ENCODE measurements at regions of chr7 and their contacts with region 1.

Region 1: GRCh38 chr7:99143853-99144672 is at the start of gene SMURF1:
- DNase-seq: peak; percentile 72
- H3K4me3 Mint-ChIP-seq: peak within 1 kb of the TSS; percentile 83
- H3K27ac Mint-ChIP-seq: peak within 1 kb of the TSS; percentile 83
- H3K4me1 Mint-ChIP-seq: peaks cover 28% of the 10 kb centered on the region
- H3K27me3 Mint-ChIP-seq: no peaks in the 10 kb centered on the region
- total RNA-seq, gene SMURF1: 12.4 and 13.5 TPM in 2 replicates

Region 2: GRCh38 chr7:99102809-99103690 is 41.0 kb before region 1 on chr7:
- intact Hi-C with region 1: loop called (anchors 2 kb)
- DNase-seq: no peak
- H3K4me3 Mint-ChIP-seq: peak overlapping the region; percentile 3
- H3K27ac Mint-ChIP-seq: peak overlapping the region; percentile 43
- H3K4me1 Mint-ChIP-seq: peaks cover 36% of the 10 kb centered on the region
- H3K27me3 Mint-ChIP-seq: no peaks in the 10 kb centered on the region

Region 3: GRCh38 chr7:99221866-99222265 is 77.8 kb after region 1 on chr7:
- intact Hi-C with region 1: no loop called
- DNase-seq: no peak
- H3K4me3 Mint-ChIP-seq: no peak overlapping the region
- H3K27ac Mint-ChIP-seq: no peak overlapping the region
- H3K4me1 Mint-ChIP-seq: peaks cover 11% of the 10 kb centered on the region
- H3K27me3 Mint-ChIP-seq: no peaks in the 10 kb centered on the region

Region 4: DNA sequence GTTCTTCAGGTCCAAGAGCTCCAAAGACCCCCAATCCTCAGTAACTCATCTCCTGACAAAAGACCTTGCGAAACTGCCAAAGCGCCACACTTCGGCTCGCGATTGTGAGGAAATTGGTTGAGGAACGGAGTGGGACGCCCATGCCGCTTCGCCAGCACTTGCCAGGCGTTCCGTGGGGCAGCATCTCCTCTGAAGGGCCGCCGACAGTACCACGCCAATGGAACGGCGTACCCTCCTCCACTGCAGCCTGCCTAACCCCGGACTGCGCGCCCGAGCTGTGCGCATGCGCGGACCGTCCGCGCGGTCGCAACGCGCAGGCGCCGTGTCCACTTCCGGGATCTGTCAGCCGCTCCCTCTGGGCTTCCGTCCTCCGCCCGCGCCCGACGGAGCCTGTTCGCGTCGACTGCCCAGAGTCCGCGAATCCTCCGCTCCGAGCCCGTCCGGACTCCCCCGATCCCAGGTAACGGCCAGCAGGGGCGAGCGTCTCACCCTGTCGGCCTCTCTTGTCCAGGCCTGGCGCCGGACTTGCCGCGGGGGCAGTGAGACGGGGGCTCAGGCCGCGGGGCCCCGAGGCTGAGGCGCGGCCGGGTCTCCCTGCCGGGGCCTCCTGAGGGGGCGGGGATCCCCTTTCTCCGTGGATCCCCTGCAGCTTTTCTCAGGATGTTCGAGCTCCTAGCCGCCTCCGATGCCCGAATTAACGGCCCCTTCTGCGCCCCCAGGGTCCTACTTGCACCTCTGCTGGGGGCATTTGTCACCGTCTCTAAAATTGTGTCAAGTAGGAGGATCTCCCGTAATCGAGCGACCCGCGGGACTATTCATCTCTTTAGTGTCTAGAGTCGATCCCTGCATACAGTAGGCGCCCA is 181.7 kb after region 1 on chr7 and contains the start of gene ARPC1A:
- intact Hi-C with region 1: loop called (anchors 5 kb)
- DNase-seq: peak; percentile 91
- H3K4me3 Mint-ChIP-seq: peak within 1 kb of the TSS; percentile 93
- H3K27ac Mint-ChIP-seq: peak within 1 kb of the TSS; percentile 88
- H3K4me1 Mint-ChIP-seq: peaks cover 36% of the 10 kb centered on the region
- H3K27me3 Mint-ChIP-seq: peaks cover 4% of the 10 kb centered on the region
- total RNA-seq, gene ARPC1A: 79.8 and 83.4 TPM in 2 replicates